ENCODE measurements at regions of chr4 and their contacts with region 1.

Region 1: GRCh38 chr4:185395956-185396723 is 416 bp upstream of the LRP2BP start:
- DNase-seq: peak; percentile 97
- H3K4me3 Mint-ChIP-seq: peak overlapping the region; percentile 84
- H3K27ac Mint-ChIP-seq: peak overlapping the region; percentile 92
- H3K4me1 Mint-ChIP-seq: peaks cover 52% of the 10 kb centered on the region
- H3K27me3 Mint-ChIP-seq: no peaks in the 10 kb centered on the region

Region 2: GRCh38 chr4:184924516-184924915 is 471.6 kb before region 1 on chr4:
- CTCF ChIA-PET with region 1: no interaction called
- POLR2A ChIA-PET with region 1: no interaction called
- DNase-seq: no peak
- H3K4me3 Mint-ChIP-seq: no peak overlapping the region
- H3K27ac Mint-ChIP-seq: no peak overlapping the region
- H3K4me1 Mint-ChIP-seq: no peaks in the 10 kb centered on the region
- H3K27me3 Mint-ChIP-seq: peaks cover 4% of the 10 kb centered on the region

Region 3: DNA sequence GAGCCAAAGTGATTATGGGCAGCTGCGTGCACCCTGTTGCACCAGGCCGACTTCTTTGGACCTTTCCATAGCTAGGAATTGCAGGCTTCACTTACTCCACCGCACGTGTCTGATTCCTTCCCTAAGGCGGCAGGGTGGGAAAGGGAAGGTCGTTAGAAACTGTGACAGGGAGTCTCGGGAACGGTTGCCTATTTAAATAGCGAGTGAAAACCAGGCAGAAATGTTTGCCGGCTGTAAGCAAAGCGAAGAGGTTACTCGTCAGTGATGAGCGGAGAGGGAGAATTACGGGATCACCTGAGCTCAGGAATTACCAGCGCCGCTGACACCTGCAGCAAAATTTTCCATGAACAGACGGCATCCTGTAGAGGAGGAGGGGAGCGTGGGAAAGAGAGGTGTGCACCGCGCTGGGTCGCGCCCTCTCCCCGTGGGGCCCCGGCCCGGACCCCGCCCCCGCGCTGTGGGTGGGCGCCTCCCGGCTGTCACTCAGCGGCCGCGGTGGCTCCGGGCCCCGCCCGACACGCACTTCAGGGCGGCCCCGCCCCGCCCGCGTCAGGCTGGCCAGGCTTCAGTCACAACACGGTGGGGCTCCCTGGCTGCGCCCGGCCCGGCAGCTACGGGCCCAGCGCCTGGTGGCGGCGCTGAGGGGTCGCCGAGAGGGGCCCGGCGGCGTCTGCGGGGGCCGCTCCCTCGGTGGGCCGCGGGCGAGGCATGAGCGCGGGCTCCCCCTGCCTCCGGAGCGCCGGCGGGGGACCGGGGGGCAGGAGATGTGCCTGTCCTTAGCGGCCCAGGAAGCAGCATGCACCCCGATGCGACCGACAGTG is 186.9 kb before region 1 on chr4 and contains the start of gene SNX25:
- CTCF ChIA-PET with region 1: interaction called, 4 read pairs
- POLR2A ChIA-PET with region 1: interaction called, 15 read pairs
- DNase-seq: peak; percentile 88
- H3K4me3 Mint-ChIP-seq: peak within 1 kb of the TSS; percentile 87
- H3K27ac Mint-ChIP-seq: peak within 1 kb of the TSS; percentile 77
- H3K4me1 Mint-ChIP-seq: peaks cover 40% of the 10 kb centered on the region
- H3K27me3 Mint-ChIP-seq: peaks cover 3% of the 10 kb centered on the region
- total RNA-seq, gene SNX25: 18.0 to 18.5 TPM

Region 4: GRCh38 chr4:185425647-185426352 is 29.7 kb after region 1 on chr4 and contains the start of gene UFSP2:
- CTCF ChIA-PET with region 1: interaction called, 4 read pairs
- POLR2A ChIA-PET with region 1: interaction called, 47 read pairs
- DNase-seq: peak; percentile 88
- H3K4me3 Mint-ChIP-seq: peak within 1 kb of the TSS; percentile 80
- H3K27ac Mint-ChIP-seq: peak within 1 kb of the TSS; percentile 94
- H3K4me1 Mint-ChIP-seq: peaks cover 20% of the 10 kb centered on the region
- H3K27me3 Mint-ChIP-seq: peaks cover 4% of the 10 kb centered on the region
- total RNA-seq, gene UFSP2: 23.4 to 23.8 TPM

Region 5: DNA sequence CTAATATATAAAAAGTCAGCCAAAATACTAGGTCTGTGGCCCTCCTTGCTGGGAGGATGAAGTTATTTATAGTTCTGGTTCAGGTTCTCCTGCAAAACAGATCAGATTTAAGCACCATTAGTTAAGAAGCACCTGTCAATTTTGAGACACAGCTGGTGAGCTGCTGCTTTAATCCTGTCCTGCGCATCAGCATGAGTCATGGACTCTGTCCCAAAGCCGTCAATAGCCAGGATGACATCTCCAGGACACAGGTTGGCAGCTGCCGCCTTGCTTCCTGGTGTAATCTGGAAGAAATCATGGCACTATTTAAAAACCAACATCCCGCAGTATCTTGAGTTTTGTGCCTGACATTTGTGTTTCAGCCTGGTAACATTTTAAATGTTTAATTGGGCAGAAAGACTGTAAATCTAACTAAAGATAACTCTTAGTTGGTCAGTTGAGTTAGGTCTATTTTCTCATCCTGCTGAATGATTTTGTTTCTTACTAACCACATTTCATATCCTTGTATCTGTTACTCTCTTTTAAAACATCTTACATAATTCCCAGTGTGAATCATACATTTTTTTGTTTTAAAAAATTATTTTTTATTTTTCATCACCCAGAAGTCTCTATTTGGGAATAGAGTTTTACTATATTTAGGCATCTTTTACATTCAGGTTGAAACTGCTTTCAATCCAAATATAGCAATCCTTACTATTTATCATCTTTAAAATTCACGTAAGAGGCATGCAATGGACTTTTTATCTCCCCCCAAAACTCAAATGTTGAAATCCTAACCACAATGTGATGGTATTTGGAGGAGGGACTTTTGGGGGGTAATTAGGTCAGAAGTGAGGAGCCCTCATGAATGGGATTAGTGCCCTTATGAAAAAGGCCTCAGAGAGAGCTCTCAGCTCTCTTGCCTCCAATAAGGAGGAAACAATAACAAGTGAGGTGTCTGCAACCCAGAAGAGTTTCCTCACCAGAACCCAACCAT is 129.0 kb after region 1 on chr4:
- CTCF ChIA-PET with region 1: no interaction called
- POLR2A ChIA-PET with region 1: no interaction called
- DNase-seq: no peak
- H3K4me3 Mint-ChIP-seq: no peak overlapping the region
- H3K27ac Mint-ChIP-seq: no peak overlapping the region
- H3K4me1 Mint-ChIP-seq: no peaks in the 10 kb centered on the region
- H3K27me3 Mint-ChIP-seq: peaks cover 35% of the 10 kb centered on the region